HAP-1 (cell line): ENCODE measurements at regions of chr6 and their contacts with region 1.

Region 1: DNA sequence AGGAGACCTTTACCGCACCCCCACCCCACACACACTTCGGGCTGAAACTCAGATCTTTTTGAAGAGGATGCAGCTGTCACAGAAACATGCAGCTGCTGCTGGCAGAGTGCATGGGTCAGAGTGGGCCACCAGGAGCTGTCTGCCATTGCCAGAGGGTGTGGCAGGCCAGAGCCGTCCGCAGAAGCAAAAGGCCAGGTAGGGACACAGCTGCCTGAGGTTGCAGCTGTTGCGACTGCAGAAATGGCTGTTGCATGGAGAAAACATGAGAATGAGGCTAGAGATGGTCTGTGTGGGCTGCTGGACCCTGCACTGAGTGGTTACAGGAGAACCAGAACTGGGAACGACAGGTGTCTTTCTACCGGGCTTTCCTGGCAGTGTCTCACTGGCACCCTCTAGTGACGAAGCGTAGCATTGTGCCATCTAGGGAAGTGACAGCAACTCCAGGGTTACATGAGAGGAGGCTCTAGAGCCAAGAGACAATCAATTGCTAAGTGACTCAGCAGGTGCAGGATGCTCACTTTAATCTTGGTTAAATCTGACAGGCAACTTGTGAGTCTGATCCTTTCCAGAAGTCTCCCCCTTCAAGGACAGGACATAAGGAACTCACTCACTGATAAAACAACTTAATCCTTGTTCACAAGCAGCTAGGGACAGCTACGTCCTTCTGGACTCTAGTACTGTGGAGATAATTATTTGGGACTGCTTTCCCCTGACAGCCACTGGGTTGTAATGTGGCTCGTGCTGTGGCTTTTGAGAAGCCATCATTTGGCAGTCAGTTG is 29.1 kb upstream of the SERPINB9 start:
- DNase-seq: peak; percentile 83 to 92
- H3K4me3 ChIP-seq: no peak overlapping the region
- H3K4me1 ChIP-seq: peaks cover 43% of the 10 kb centered on the region
- H3K27me3 ChIP-seq: no peaks in the 10 kb centered on the region

Region 2: DNA sequence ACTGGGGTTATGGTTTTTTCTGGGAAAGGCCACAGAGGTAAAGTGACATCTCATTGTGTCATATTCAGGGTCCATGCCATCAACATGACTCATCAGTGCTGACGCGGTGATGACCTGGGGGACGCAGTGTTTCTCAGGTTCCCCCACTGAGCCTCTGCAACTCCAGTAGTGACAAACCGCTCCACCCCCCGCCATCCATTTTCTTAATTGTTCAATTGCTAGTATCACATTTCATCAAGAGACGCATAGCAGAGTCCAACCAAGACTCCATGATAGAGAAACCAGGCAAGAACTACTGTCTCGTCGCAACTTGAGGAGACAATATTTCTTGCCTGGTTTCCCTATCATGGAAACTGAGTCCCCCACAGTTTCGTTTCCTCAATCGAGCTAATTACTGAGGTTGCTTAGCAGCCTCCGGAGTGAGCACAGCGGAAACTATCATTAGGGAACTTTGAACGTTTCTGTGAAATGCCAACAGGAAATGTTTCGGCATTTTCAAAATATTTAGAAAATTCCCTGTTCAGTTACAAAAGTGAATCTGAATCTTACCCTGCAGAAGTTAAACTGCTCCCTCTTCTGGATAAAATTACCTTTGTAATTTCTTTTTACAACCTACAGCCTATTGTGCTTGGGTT is 78.3 kb before region 1 on chr6:
- in situ Hi-C with region 1: loop called (anchors 5 kb)
- DNase-seq: peak; percentile 36 to 60
- H3K4me3 ChIP-seq: no peak overlapping the region
- H3K4me1 ChIP-seq: peaks cover 11% of the 10 kb centered on the region
- H3K27me3 ChIP-seq: no peaks in the 10 kb centered on the region

Region 3: GRCh38 chr6:3032986-3033385 is 100.8 kb after region 1 on chr6:
- in situ Hi-C with region 1: no loop called
- DNase-seq: no peak
- H3K4me3 ChIP-seq: no peak overlapping the region
- H3K4me1 ChIP-seq: no peaks in the 10 kb centered on the region; the same call in 1 of the 2 replicates
- H3K27me3 ChIP-seq: no peaks in the 10 kb centered on the region